Naive thymus-derived CD4-positive, alpha-beta T cell (primary cell): ENCODE measurements at regions of chr2 and their contacts with region 1.

Region 1: DNA sequence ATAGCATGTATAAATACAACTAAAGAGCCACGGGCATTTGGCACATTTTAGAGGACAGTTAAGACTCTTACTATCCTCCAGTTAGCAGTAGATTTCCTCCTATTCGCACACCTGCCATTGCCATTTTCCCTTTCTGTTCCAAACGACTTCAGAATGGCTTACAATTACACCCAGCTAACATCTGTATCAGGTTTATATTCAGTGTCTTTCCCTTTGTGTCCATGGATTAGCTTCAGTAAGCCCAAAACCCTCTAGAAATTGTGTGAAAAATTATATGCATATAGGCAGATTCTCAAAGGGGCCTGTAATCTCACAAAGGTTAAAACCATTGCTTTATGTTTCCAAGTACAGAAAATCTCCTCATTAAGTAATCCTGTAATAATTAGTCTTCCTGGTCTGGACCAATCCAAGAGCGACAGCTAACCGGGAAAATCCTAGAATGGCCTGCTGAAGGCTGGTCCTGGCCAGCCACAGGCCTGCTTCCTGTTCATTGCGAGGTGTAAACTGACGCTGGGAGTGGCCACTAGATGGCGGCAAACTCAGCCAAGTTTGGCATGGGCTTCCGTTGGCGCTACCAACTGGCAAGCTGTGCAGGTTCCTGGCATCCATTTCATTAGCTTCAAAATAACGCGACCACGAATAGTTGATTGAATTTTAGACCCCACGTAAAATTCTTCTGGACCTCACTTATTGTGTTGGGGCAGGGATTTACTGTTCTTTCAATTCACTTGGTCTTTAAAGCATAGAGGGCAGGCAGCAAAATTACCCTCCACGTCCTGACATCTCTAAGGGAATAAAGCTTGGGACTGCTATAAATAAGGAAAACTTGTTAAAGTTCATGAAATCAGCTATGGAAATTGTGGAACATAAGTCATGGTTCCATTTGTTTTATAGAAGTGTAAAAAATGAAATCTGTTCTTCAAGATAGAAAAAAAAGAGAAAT is 17.1 kb downstream of the ARHGAP25 start:
- DNase-seq: peak; percentile 77 to 88 (median 85)
- ATAC-seq: peak; percentile 97
- H3K4me3 ChIP-seq: peak overlapping the region; percentile 24
- H3K4me3 Mint-ChIP-seq: peak overlapping the region; percentile 9 to 94 (median 66)
- H3K27ac ChIP-seq: peak overlapping the region; percentile 65
- H3K27ac Mint-ChIP-seq: peak overlapping the region in 8 of 9 donors; percentile 57 to 96 (median 82)
- H3K4me1 ChIP-seq: peaks cover 82 to 83% of the 10 kb centered on the region in 2 donors
- H3K4me1 Mint-ChIP-seq: peaks cover 61 to 94% (median 87%) of the 10 kb centered on the region in 7 donors
- H3K27me3 ChIP-seq: no peaks in the 10 kb centered on the region
- H3K27me3 Mint-ChIP-seq: no peaks in the 10 kb centered on the region

Region 2: GRCh38 chr2:68499133-68499532 is 252.5 kb before region 1 on chr2:
- CTCF ChIA-PET with region 1: no interaction called
- POLR2A ChIA-PET with region 1: no interaction called
- intact Hi-C with region 1: no loop called
- DNase-seq: no peak
- ATAC-seq: no peak
- H3K4me3 ChIP-seq: no peak overlapping the region
- H3K4me3 Mint-ChIP-seq: no peak overlapping the region
- H3K27ac ChIP-seq: no peak overlapping the region
- H3K27ac Mint-ChIP-seq: no peak overlapping the region
- H3K4me1 ChIP-seq: no peaks in the 10 kb centered on the region
- H3K4me1 Mint-ChIP-seq: peaks cover 0 to 2% (median 0%) of the 10 kb centered on the region in 7 donors
- H3K27me3 ChIP-seq: no peaks in the 10 kb centered on the region
- H3K27me3 Mint-ChIP-seq: no peaks in the 10 kb centered on the region

Region 3: GRCh38 chr2:68709421-68709911 is 42.2 kb before region 1 on chr2:
- CTCF ChIA-PET with region 1: interaction called, 68 read pairs
- POLR2A ChIA-PET with region 1: interaction called, 5 read pairs
- intact Hi-C with region 1: loop called (anchors 1 kb)
- DNase-seq: peak in 7 of 9 donors; percentile 14 to 41 (median 37)
- ATAC-seq: peak; percentile 66
- H3K4me3 ChIP-seq: no peak overlapping the region
- H3K4me3 Mint-ChIP-seq: peak overlapping the region in 5 of 10 donors; percentile 10 to 75 (median 55)
- H3K27ac ChIP-seq: no peak overlapping the region
- H3K27ac Mint-ChIP-seq: peak overlapping the region in 6 of 9 donors; percentile 22 to 74 (median 42)
- H3K4me1 ChIP-seq: peaks cover under 1 to 3% of the 10 kb centered on the region in 2 donors
- H3K4me1 Mint-ChIP-seq: peaks cover 5 to 32% (median 26%) of the 10 kb centered on the region in 7 donors
- H3K27me3 ChIP-seq: no peaks in the 10 kb centered on the region
- H3K27me3 Mint-ChIP-seq: peaks cover 0 to 16% (median 0%) of the 10 kb centered on the region in 5 donors

Region 4: GRCh38 chr2:68734688-68735525 is 16.8 kb before region 1 on chr2 and contains the start of gene ARHGAP25:
- CTCF ChIA-PET with region 1: interaction called, 73 read pairs
- POLR2A ChIA-PET with region 1: interaction called, 38 read pairs
- intact Hi-C with region 1: loop called (anchors 1 kb)
- DNase-seq: peak; percentile 20 to 81 (median 69)
- ATAC-seq: peak; percentile 78
- H3K4me3 ChIP-seq: peak within 1 kb of the TSS; percentile 77
- H3K4me3 Mint-ChIP-seq: no peak within 1 kb of the TSS
- H3K27ac ChIP-seq: peak within 1 kb of the TSS; percentile 78
- H3K27ac Mint-ChIP-seq: no peak within 1 kb of the TSS
- H3K4me1 ChIP-seq: peaks cover 38 to 48% of the 10 kb centered on the region in 2 donors
- H3K4me1 Mint-ChIP-seq: peaks cover 23 to 37% (median 32%) of the 10 kb centered on the region in 7 donors
- H3K27me3 ChIP-seq: no peaks in the 10 kb centered on the region
- H3K27me3 Mint-ChIP-seq: no peaks in the 10 kb centered on the region
- total RNA-seq, gene ARHGAP25: 68.2 to 139 (median 116) TPM

Region 5: GRCh38 chr2:68774569-68775271 is 23.1 kb after region 1 on chr2:
- CTCF ChIA-PET with region 1: interaction called, 36 read pairs
- POLR2A ChIA-PET with region 1: interaction called, 288 read pairs
- intact Hi-C with region 1: loop called (anchors 1 kb)
- DNase-seq: peak in 7 of 9 donors; percentile 33 to 71 (median 45)
- ATAC-seq: peak; percentile 81
- H3K4me3 ChIP-seq: peak overlapping the region; percentile 69
- H3K4me3 Mint-ChIP-seq: peak overlapping the region; percentile 76 to 94 (median 84)
- H3K27ac ChIP-seq: peak overlapping the region; percentile 82
- H3K27ac Mint-ChIP-seq: peak overlapping the region in 8 of 9 donors; percentile 87 to 99 (median 98)
- H3K4me1 ChIP-seq: peaks cover 86 to 87% of the 10 kb centered on the region in 2 donors
- H3K4me1 Mint-ChIP-seq: peaks cover 84 to 96% (median 90%) of the 10 kb centered on the region in 7 donors
- H3K27me3 ChIP-seq: no peaks in the 10 kb centered on the region
- H3K27me3 Mint-ChIP-seq: no peaks in the 10 kb centered on the region

Region 6: DNA sequence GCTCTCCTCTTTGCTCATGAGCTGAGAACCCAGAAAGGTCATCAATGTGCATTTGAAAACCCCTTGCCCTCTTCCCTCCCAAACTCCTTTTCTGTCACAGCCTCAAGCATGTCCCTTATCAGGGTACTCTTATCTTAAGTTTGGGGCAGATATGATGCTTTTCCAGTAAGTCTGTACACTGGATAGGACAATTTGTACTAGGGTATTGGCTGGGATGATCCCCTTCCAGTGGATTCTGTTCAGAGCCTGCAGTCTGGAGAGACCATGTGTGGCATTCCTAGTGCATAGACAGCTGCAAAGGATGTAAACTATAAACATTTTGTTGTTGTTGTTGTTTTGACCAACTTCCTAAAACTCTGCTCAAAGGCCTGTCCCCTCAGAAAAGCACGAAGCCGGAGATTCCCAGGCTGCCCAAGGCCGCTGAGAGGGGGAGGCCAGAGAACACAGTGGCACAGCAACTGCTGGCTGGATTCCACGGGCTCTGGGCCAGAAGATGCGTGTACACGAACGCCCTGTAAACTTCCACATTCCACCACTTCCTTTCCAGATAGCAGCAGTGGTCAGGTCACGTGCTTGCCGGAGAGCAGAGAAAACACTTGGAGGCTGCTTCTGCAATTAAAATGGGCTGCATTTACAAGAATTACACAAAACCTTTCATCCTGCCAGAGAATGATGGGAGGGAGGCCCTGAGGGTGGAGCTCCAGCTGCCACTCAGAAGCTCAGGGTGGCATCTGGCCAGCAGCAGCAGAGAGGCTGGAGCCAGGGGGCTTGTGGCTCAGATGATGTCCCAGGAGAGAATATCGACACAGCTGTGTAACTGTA is 77.4 kb after region 1 on chr2:
- CTCF ChIA-PET with region 1: interaction called, 87 read pairs
- POLR2A ChIA-PET with region 1: interaction called, 5 read pairs
- intact Hi-C with region 1: loop called (anchors 2 kb)
- DNase-seq: peak; percentile 43 to 87 (median 79)
- ATAC-seq: peak; percentile 76
- H3K4me3 ChIP-seq: peak overlapping the region; percentile 15
- H3K4me3 Mint-ChIP-seq: peak overlapping the region; percentile 67 to 89 (median 78)
- H3K27ac ChIP-seq: peak overlapping the region; percentile 61
- H3K27ac Mint-ChIP-seq: peak overlapping the region; percentile 84 to 98 (median 94)
- H3K4me1 ChIP-seq: peaks cover 32 to 51% of the 10 kb centered on the region in 2 donors
- H3K4me1 Mint-ChIP-seq: peaks cover 59 to 85% (median 71%) of the 10 kb centered on the region in 7 donors
- H3K27me3 ChIP-seq: no peaks in the 10 kb centered on the region
- H3K27me3 Mint-ChIP-seq: no peaks in the 10 kb centered on the region

Region 7: DNA sequence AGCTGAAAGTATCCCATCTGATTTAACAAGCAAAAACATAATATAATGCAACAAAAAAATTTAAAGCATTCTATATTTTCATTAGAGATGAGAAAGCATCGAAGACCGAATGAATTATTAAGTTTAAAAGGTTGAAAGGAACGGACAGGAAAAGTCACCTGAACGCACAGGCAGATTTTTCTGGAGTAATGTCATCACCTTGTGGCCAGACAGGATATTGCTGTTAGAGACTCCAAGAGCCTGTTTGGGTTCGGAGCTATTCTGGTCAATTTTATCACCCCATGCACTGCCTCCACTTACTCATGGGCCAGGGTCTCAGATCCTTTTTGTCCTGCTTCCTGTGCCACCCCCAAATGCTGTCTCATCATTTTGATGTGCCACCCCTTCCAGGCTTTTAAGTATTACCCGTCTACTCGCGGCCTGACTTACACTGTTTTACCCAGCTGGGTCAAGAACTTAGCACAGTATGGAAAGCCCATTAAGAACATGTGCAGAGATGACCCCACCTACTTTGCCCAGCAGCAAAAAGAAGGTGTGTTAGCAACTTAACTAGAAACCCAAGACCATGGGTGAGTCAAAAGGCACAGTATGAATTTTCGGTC is 173.7 kb after region 1 on chr2:
- CTCF ChIA-PET with region 1: interaction called, 18 read pairs
- POLR2A ChIA-PET with region 1: interaction called, 4 read pairs
- intact Hi-C with region 1: loop called (anchors 1 kb)
- DNase-seq: peak in 7 of 9 donors; percentile 40 to 70 (median 63)
- ATAC-seq: peak; percentile 84
- H3K4me3 ChIP-seq: no peak overlapping the region
- H3K4me3 Mint-ChIP-seq: no peak overlapping the region
- H3K27ac ChIP-seq: no peak overlapping the region
- H3K27ac Mint-ChIP-seq: peak overlapping the region in 2 of 9 donors; percentile 48 to 53
- H3K4me1 ChIP-seq: no peaks in the 10 kb centered on the region
- H3K4me1 Mint-ChIP-seq: peaks cover 0 to 8% (median 0%) of the 10 kb centered on the region in 7 donors
- H3K27me3 ChIP-seq: no peaks in the 10 kb centered on the region
- H3K27me3 Mint-ChIP-seq: peaks cover 0 to 31% (median 4%) of the 10 kb centered on the region in 5 donors

Region 8: DNA sequence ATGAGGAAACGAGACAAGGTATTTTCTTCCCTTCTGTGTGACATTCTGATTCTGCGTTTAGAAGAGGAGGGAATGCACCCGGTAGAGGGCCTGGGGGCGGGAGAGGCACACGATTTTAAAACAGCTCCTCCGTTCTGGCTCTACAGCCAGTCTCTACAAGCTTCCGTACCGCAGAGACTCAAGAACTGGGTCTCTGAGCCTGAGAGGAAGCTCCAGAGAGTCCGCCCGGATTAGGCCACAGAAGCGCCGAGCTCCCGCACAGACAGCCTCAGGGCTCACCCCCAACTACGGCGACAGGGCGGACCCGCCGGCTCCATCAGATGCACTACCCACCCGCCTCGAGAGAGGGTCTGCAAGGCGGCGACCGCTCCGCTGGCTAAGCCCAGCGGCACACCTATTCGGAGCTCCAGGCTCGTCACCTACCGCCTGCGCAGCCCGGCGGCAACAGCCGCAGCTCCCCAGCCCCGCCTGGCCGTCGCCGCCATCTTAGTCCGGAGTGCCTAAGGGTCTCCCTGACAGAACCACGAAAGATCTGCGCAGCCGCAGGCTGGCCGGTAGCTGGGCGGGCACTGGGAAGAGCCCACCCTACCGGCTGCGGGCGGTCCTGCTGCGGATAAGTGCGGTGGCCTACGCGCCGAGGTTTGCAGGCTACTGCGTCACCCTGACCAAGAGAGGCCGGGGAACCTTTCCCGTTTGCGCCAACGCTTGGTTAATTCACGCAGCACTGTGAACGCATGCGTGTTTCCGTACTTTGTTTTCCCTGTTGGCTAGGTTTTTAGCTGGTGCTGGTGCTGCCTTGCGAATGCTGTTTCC is 685.5 kb after region 1 on chr2 and contains the start of gene NFU1:
- CTCF ChIA-PET with region 1: no interaction called
- POLR2A ChIA-PET with region 1: no interaction called
- intact Hi-C with region 1: no loop called
- DNase-seq: peak; percentile 76 to 89 (median 85)
- ATAC-seq: peak; percentile 91
- H3K4me3 ChIP-seq: peak within 1 kb of the TSS; percentile 68
- H3K4me3 Mint-ChIP-seq: peak within 1 kb of the TSS; percentile 92 to 100 (median 94)
- H3K27ac ChIP-seq: peak within 1 kb of the TSS; percentile 98
- H3K27ac Mint-ChIP-seq: peak within 1 kb of the TSS; percentile 97 to 100 (median 99)
- H3K4me1 ChIP-seq: peaks cover 18 to 21% of the 10 kb centered on the region in 2 donors
- H3K4me1 Mint-ChIP-seq: peaks cover 14 to 48% (median 40%) of the 10 kb centered on the region in 7 donors
- H3K27me3 ChIP-seq: no peaks in the 10 kb centered on the region
- H3K27me3 Mint-ChIP-seq: no peaks in the 10 kb centered on the region
- total RNA-seq, gene NFU1: 16.1 to 25.8 (median 22.6) TPM